Activated CD8-positive, alpha-beta memory T cell treated with anti-CD3 and anti-CD28 coated beads, Interleukin-2, amount 10 ng/mL, durations not matched to agents 7 days and 5 days (primary cell): ENCODE measurements at regions of chr14 and their contacts with region 1.

Region 1: DNA sequence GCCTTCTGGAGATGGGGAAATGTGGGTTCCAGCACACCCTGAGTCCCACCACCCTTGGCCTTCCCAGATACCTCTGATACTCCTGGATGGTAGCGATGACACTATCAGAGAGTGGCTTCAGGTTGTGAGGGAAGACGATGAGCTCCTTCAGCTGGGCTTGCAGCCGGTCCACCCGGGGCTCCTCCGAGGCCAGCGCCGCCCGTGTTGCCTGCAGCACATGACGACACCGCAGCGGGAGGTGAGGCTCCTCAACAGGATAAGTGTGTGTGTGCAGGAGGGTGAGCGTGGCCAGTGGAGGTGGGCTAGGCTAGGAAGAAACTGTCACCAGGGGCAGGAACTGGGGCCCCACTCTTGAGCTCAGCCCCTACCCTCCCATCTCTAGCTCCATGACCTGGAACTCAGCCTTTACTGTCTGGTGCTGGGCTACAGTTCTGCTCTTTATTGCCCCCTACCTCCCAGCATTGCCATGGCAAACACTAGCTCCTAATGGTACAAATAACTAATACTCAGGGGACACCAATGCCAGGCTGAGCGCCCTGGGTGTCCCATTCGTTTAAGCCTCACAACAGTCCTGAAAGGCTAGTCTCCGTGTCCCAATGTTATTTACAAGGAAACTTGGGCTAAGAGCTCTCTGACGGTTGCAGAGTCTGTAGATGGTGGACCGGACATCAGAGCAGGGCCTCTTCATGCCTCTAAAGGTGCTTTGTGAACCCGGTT is 64.1 kb downstream of the SYNE3 start:
- DNase-seq: no peak
- ATAC-seq: no peak
- H3K4me3 Mint-ChIP-seq: no peak overlapping the region
- H3K27ac Mint-ChIP-seq: no peak overlapping the region
- H3K4me1 Mint-ChIP-seq: no peaks in the 10 kb centered on the region
- H3K27me3 Mint-ChIP-seq: no peaks in the 10 kb centered on the region

Region 2: GRCh38 chr14:95123891-95124579 is 328.3 kb before region 1 on chr14:
- CTCF ChIA-PET with region 1: no interaction called
- DNase-seq: no peak
- ATAC-seq: no peak
- H3K4me3 Mint-ChIP-seq: no peak overlapping the region
- H3K27ac Mint-ChIP-seq: no peak overlapping the region
- H3K4me1 Mint-ChIP-seq: peaks cover 6% of the 10 kb centered on the region
- H3K27me3 Mint-ChIP-seq: no peaks in the 10 kb centered on the region

Region 3: GRCh38 chr14:95348395-95349080 is 103.8 kb before region 1 on chr14:
- CTCF ChIA-PET with region 1: no interaction called
- DNase-seq: no peak
- ATAC-seq: no peak
- H3K4me3 Mint-ChIP-seq: no peak overlapping the region
- H3K27ac Mint-ChIP-seq: no peak overlapping the region
- H3K4me1 Mint-ChIP-seq: no peaks in the 10 kb centered on the region
- H3K27me3 Mint-ChIP-seq: peaks cover 19% of the 10 kb centered on the region

Region 4: DNA sequence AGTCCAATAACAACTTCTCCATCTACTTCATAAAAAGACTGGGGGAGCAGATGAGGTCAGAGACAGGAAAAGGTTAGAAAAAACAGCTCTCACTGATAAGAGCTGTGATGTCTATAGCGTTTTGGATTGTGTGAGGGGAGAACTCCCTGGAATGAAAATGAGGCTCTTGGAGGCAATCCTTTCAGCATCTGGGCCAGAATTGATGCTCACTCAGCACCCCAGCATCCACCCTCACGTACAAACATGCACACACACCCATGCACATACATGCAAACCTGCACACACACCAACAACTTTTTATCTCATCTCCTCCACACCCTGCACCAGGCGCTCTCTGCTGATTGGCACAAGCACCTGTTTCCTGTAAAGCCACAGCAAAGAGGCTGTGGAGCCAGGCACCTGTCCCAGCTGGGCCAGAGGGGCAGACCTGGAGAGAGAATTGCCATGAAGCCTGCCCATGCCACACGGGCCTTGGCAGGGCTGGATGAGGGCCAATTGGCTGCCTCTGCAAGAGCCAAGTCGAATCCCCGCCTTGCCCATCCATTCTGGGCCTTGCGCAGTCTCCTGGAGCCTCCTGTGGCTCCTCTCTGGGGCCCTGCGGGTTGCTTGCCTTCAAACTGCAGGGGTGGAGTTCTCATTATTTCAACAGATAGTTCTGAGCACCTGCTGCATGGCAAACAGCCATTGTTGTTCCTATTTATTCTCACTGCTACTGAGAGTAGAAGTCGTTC is 11.0 kb after region 1 on chr14:
- CTCF ChIA-PET with region 1: interaction called, 11 read pairs
- DNase-seq: no peak
- ATAC-seq: peak; percentile 57
- H3K4me3 Mint-ChIP-seq: no peak overlapping the region
- H3K27ac Mint-ChIP-seq: peak overlapping the region; percentile 76
- H3K4me1 Mint-ChIP-seq: peaks cover 29% of the 10 kb centered on the region
- H3K27me3 Mint-ChIP-seq: no peaks in the 10 kb centered on the region

Region 5: DNA sequence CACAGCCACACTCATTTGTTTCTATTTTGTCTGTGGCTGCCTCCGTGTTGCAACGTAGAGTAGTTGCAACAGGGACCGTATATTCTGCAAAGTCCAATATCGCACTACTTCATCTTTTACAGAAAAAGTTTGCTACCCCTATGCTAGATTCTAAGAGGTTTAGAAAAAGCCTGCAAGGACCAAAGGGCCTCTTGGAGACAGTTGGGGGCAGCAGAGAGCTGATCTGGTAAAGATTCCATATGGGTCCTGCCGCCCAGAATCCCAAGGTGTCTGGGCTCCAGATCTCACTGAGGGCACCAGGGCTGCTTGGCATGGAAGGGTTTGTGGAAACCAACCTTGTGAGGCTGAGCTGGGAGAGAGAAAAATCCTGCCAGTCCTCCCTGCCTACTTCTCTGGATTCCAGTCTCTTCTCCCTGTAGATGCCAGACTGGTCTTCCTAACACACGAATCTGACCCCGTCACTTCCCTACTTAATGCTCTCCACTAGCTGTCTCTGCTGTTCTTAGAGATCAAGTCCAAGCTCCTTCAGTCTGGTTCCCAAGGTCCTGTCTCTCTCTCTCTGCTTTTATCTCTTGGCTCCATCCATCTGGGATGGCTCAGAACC is 157.2 kb after region 1 on chr14:
- CTCF ChIA-PET with region 1: no interaction called
- DNase-seq: no peak
- ATAC-seq: no peak
- H3K4me3 Mint-ChIP-seq: no peak overlapping the region
- H3K27ac Mint-ChIP-seq: no peak overlapping the region
- H3K4me1 Mint-ChIP-seq: no peaks in the 10 kb centered on the region
- H3K27me3 Mint-ChIP-seq: peaks cover 37% of the 10 kb centered on the region